Mammary epithelial cell (primary cell): ENCODE measurements at regions of chr1 and their contacts with region 1.

Region 1: GRCh38 chr1:48109390-48110013 is 112.3 kb upstream of the TRABD2B start:
- DNase-seq: peak; percentile 54
- H3K4me3 ChIP-seq: no peak overlapping the region
- H3K27ac ChIP-seq: no peak overlapping the region
- H3K4me1 ChIP-seq: no peaks in the 10 kb centered on the region
- H3K27me3 ChIP-seq: peaks cover 3% of the 10 kb centered on the region
- CTCF ChIP-seq: peak; percentile 94 to 96

Region 2: DNA sequence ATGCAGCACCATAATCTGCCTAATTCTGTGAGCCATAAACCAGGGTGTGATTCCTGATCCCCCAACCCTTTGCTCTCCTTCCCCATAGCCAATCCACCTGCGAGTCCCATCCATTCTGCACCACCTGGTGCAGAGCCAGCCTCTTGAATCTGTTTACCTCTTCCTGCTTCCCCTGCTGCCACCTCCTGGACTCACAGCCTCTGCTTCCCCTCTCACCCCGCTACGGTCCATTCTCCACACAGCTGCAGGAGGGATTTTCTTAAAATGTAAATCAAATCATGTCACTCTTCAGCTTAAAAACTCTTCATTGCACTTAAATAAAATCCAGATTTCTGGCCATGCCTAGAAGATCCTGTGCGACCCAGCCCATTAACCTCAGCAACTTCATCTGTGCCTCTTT is 485.0 kb before region 1 on chr1:
- CTCF ChIA-PET with region 1: no interaction called
- dilution Hi-C with region 1: no loop called
- in situ Hi-C with region 1: no loop called
- intact Hi-C with region 1: no loop called
- DNase-seq: peak; percentile 10
- H3K4me3 ChIP-seq: no peak overlapping the region
- H3K27ac ChIP-seq: no peak overlapping the region
- H3K4me1 ChIP-seq: no peaks in the 10 kb centered on the region
- H3K27me3 ChIP-seq: no peaks in the 10 kb centered on the region
- CTCF ChIP-seq: peak; percentile 39 to 72

Region 3: GRCh38 chr1:47738560-47739182 is 370.8 kb before region 1 on chr1:
- CTCF ChIA-PET with region 1: no interaction called
- dilution Hi-C with region 1: no loop called
- in situ Hi-C with region 1: no loop called
- intact Hi-C with region 1: loop called (anchors 1 kb)
- DNase-seq: peak; percentile 32
- H3K4me3 ChIP-seq: no peak overlapping the region
- H3K27ac ChIP-seq: no peak overlapping the region
- H3K4me1 ChIP-seq: no peaks in the 10 kb centered on the region
- H3K27me3 ChIP-seq: no peaks in the 10 kb centered on the region
- CTCF ChIP-seq: peak; percentile 76 to 89

Region 4: GRCh38 chr1:47997289-47998200 is 112.0 kb before region 1 on chr1 and contains the start of gene TRABD2B:
- CTCF ChIA-PET with region 1: no interaction called
- dilution Hi-C with region 1: no loop called
- in situ Hi-C with region 1: no loop called
- intact Hi-C with region 1: loop called (anchors 1 kb)
- DNase-seq: peak; percentile 69
- H3K4me3 ChIP-seq: peak within 1 kb of the TSS; percentile 57 to 75 (median 69)
- H3K27ac ChIP-seq: no peak within 1 kb of the TSS
- H3K4me1 ChIP-seq: peaks cover 23% of the 10 kb centered on the region
- H3K27me3 ChIP-seq: no peaks in the 10 kb centered on the region
- CTCF ChIP-seq: peak; percentile 55 to 96
- total RNA-seq, gene TRABD2B: 1.2 TPM

Region 5: DNA sequence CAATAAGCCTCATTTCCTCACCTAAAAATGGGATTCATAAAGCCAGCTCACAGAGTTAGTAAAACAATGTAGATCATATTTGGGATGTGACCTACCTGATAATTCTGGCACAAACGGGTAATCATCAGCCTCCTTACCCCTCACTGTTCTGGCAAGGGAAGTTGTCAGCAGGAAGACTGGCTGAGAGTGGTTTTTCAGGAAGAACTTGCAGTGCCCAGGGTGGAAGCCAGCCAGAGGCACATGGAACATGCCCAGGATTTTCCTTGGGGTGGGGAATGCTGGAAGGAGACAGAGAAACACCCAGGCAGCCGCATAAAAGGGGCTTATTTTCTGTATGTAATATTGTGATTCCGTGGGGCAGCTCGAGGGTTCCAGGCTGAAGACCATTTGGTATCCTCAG is 105.3 kb after region 1 on chr1:
- CTCF ChIA-PET with region 1: no interaction called
- dilution Hi-C with region 1: loop called (anchors 5 kb)
- in situ Hi-C with region 1: no loop called
- intact Hi-C with region 1: no loop called
- DNase-seq: no peak
- H3K4me3 ChIP-seq: no peak overlapping the region
- H3K27ac ChIP-seq: no peak overlapping the region
- H3K4me1 ChIP-seq: no peaks in the 10 kb centered on the region
- H3K27me3 ChIP-seq: no peaks in the 10 kb centered on the region
- CTCF ChIP-seq: no peak

Region 6: GRCh38 chr1:48236716-48237470 is 127.4 kb after region 1 on chr1:
- CTCF ChIA-PET with region 1: no interaction called
- dilution Hi-C with region 1: no loop called
- in situ Hi-C with region 1: loop called in 1 of 2 experiments (anchors 10 kb)
- intact Hi-C with region 1: loop called (anchors 1 kb)
- DNase-seq: peak; percentile 34
- H3K4me3 ChIP-seq: no peak overlapping the region
- H3K27ac ChIP-seq: no peak overlapping the region
- H3K4me1 ChIP-seq: no peaks in the 10 kb centered on the region
- H3K27me3 ChIP-seq: no peaks in the 10 kb centered on the region
- CTCF ChIP-seq: peak; percentile 77 to 86

Region 7: GRCh38 chr1:48498096-48498791 is 388.7 kb after region 1 on chr1:
- CTCF ChIA-PET with region 1: no interaction called
- dilution Hi-C with region 1: no loop called
- in situ Hi-C with region 1: loop called (anchors 10 to 25 kb)
- intact Hi-C with region 1: loop called (anchors 1 kb)
- DNase-seq: peak; percentile 43
- H3K4me3 ChIP-seq: no peak overlapping the region
- H3K27ac ChIP-seq: no peak overlapping the region
- H3K4me1 ChIP-seq: peaks cover 14% of the 10 kb centered on the region
- H3K27me3 ChIP-seq: no peaks in the 10 kb centered on the region
- CTCF ChIP-seq: peak; percentile 95 to 97

Region 8: DNA sequence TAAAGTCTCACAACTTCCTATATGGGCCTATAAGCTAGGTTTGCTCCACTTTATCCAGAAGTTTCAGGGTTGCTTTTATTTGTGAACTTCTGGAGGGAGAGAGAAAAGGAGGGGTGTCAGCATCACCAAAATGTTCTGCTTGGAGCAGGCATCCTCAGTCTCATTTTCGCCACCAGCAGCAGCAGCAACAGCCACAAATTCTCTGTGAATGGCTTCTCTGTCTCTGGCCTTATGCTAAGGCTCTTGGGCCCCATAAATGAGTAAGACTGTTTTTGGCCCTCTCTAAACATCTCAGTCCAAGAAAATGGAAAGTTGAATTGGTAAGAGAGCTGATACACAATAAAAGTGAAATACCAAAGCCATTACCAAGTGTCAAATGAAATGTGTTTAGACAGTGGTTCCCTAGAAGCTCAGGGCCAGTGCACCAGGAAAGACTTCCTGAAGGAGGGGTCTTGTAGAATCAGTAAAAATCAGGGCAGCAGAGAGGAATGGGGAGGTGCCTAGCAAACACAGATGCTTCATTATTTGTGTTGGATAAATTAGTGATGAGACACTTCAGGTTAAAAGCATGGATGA is 415.5 kb after region 1 on chr1:
- CTCF ChIA-PET with region 1: no interaction called
- dilution Hi-C with region 1: no loop called
- in situ Hi-C with region 1: loop called in 1 of 2 experiments (anchors 25 kb)
- intact Hi-C with region 1: no loop called
- DNase-seq: no peak
- H3K4me3 ChIP-seq: no peak overlapping the region
- H3K27ac ChIP-seq: no peak overlapping the region
- H3K4me1 ChIP-seq: no peaks in the 10 kb centered on the region
- H3K27me3 ChIP-seq: peaks cover 3% of the 10 kb centered on the region
- CTCF ChIP-seq: no peak